Ascending aorta (tissue), 2 donors: ENCODE measurements at regions of chr10 and their contacts with region 1.

Region 1: DNA sequence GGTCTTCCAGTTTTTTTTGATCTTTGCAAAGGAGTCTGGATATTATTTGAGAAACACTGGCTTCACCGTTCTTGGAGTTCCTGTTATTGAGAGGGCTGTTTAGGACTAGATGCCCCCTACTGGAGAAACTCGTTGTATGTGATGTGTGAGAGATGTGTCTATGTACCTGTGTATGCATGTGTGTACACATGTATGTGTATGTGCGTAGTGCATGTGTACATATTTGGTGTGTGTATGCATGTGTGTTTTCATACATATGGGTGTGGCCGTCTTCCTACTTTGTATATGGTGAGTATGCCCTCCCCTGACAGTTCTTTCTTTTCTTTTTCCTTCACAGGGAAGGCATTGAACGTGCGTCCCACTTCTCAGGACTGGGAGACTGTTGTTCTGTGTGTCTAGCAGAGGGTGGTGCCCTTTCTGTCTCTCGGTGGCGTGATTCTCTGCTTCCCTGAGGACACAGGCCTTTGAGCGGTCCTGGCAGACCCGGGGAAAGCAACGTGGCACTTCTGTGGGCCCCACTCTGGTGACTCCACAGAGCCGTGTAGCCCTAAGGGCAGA is 3.0 kb upstream of the CALHM3 start:
- DNase-seq: no peak
- H3K4me3 ChIP-seq: no peak overlapping the region
- H3K27ac ChIP-seq: no peak overlapping the region
- H3K4me1 ChIP-seq: no peaks in the 10 kb centered on the region
- H3K27me3 ChIP-seq: no peaks in the 10 kb centered on the region
- CTCF ChIP-seq: peak; percentile 59 to 70 (median 59)

Region 2: DNA sequence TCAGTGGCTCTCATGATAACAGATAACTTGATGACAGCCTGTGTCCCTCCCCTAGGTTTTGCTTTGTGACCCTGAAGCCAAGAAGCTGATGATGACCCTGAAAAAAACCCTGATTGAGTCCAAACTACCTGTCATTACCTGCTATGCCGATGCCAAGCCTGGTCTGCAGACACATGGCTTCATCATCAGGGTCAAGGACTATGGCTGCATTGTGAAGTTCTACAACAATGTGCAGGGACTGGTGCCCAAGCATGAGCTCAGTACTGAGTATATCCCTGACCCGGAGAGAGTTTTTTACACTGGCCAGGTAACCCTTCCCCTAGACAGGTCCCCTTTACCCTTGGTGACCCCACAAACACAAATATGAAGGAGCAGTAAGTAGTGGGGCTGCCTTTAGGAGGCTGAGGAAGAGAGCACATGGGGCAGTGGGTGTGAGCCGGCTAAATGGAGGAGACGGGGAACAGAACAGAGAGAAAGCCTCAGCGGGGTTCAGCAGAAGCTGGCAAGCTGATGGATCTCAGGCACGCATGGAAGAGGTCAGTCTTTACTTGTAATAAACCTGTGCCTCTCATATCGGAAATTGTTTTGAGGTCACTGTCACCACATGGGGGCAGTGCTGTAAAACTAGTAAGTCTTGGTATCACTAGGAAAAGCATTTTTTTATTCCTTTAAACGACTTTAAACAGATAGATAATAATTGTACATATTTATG is 65.5 kb before region 1 on chr10:
- intact Hi-C with region 1: loop called (anchors 1 kb)
- DNase-seq: peak in 1 of 2 donors; percentile 76
- H3K4me3 ChIP-seq: no peak overlapping the region
- H3K27ac ChIP-seq: no peak overlapping the region
- H3K4me1 ChIP-seq: no peaks in the 10 kb centered on the region
- H3K27me3 ChIP-seq: no peaks in the 10 kb centered on the region
- CTCF ChIP-seq: peak; percentile 47 to 72 (median 66)

Region 3: DNA sequence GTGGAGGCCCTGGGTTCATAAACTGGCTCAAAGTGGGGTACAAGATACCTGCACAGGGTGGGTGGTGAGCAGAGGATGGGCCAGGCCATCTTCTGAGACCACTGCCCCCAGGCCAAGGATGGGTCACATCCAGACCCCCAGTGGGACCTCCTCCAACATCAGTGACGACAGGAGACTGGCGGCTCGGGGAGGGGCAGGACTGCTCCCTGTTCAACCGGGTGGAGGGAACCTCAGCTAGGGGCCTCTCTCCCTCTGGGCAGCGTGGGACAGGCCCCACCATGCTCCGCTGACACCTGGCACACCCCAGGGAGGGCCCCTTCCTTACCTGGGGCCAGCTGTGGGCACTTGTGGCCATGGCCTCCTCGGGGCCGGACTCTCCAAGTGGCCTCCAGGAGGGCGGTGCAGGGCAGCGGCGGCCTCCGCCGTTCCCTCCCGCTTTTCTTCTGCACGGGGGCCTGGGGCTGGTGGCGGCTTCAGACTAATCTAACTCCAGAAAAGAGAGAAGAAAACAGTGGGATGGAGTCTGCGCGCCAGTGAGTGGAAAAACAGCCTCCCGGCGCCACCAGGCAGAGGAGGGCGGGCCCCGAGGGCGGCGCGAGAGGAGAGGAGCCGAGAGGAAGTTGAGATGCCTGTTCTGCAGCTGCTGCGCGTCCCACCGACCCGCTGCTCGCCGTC is 30.1 kb before region 1 on chr10 and contains the start of gene CALHM2:
- intact Hi-C with region 1: loop called (anchors 1 kb)
- DNase-seq: peak in 1 of 2 donors; percentile 84
- H3K4me3 ChIP-seq: peak within 1 kb of the TSS; percentile 75 to 76
- H3K27ac ChIP-seq: peak within 1 kb of the TSS; percentile 90 to 95
- H3K4me1 ChIP-seq: peaks cover 27 to 39% of the 10 kb centered on the region in 2 donors
- H3K27me3 ChIP-seq: no peaks in the 10 kb centered on the region
- CTCF ChIP-seq: no peak
- total RNA-seq, gene CALHM2: 124 TPM